B cell (primary cell): ENCODE measurements at regions of chr12 and their contacts with region 1.

Region 1: GRCh38 chr12:29380536-29381523 is at the start of gene ERGIC2:
- DNase-seq: peak; percentile 98
- ATAC-seq: peak; percentile 91
- H3K4me3 ChIP-seq: peak within 1 kb of the TSS; percentile 82 to 100 (median 99)
- H3K4me3 Mint-ChIP-seq: peak within 1 kb of the TSS; percentile 89
- H3K27ac ChIP-seq: peak within 1 kb of the TSS; percentile 86 to 88
- H3K27ac Mint-ChIP-seq: peak within 1 kb of the TSS; percentile 90
- H3K4me1 ChIP-seq: peaks cover 13 to 17% of the 10 kb centered on the region in 2 donors
- H3K4me1 Mint-ChIP-seq: peaks cover 35% of the 10 kb centered on the region
- H3K27me3 ChIP-seq: no peaks in the 10 kb centered on the region
- H3K27me3 Mint-ChIP-seq: peaks cover 8% of the 10 kb centered on the region
- CTCF ChIP-seq: no peak
- total RNA-seq, gene ERGIC2: 37.2 and 40.2 TPM in 2 replicates

Region 2: DNA sequence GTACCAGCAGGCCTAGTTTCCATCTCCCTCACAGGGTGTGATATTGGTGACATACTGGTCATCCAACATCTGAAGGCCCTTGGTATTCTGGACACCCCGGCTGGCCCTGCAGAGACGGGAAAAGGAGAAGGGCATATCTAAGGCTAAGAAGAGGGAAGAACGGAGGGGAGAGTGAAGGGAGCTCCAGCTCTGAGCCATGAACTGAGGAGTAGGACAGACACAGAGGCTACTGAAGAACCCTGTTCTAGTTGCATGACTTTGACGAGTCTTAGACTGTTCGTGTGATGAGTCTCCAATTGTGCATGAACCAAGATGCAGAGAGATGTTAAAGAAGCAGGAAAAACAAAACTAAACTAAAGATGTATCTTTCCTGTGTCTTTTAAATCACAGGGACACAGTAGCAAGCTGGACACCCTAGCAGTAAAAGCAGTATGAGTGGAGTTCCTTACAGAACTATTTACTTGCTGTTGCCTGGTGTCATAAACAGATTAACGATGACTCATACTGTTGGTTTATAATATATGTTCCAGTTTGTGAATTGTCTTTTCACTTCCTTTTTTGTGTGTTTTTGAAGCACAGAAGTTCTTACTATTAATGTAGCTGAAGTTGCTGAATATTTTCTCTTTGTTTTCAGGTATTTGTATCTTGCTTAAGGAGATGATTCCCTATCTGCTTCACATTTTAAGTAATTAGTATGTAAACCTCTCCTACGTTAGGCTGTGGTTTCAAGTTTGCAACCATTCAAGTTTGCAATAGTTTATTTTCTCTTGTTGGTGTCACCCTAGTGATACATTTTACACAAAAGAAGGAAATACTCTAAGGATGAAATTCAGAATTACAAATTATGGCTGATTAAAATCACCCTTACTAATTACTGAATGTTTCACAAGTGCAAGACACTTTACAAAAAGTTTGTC is 216.1 kb before region 1 on chr12:
- CTCF ChIA-PET with region 1: no interaction called
- POLR2A ChIA-PET with region 1: no interaction called
- intact Hi-C with region 1: loop called (anchors 5 kb)
- DNase-seq: peak; percentile 57
- ATAC-seq: peak; percentile 89
- H3K4me3 ChIP-seq: no peak overlapping the region
- H3K4me3 Mint-ChIP-seq: peak overlapping the region; percentile 7
- H3K27ac ChIP-seq: peak overlapping the region in 1 of 2 donors; percentile 49
- H3K27ac Mint-ChIP-seq: peak overlapping the region; percentile 32
- H3K4me1 ChIP-seq: peaks cover 11 to 13% of the 10 kb centered on the region in 2 donors
- H3K4me1 Mint-ChIP-seq: peaks cover 16% of the 10 kb centered on the region
- H3K27me3 ChIP-seq: no peaks in the 10 kb centered on the region
- H3K27me3 Mint-ChIP-seq: no peaks in the 10 kb centered on the region
- CTCF ChIP-seq: no peak

Region 3: DNA sequence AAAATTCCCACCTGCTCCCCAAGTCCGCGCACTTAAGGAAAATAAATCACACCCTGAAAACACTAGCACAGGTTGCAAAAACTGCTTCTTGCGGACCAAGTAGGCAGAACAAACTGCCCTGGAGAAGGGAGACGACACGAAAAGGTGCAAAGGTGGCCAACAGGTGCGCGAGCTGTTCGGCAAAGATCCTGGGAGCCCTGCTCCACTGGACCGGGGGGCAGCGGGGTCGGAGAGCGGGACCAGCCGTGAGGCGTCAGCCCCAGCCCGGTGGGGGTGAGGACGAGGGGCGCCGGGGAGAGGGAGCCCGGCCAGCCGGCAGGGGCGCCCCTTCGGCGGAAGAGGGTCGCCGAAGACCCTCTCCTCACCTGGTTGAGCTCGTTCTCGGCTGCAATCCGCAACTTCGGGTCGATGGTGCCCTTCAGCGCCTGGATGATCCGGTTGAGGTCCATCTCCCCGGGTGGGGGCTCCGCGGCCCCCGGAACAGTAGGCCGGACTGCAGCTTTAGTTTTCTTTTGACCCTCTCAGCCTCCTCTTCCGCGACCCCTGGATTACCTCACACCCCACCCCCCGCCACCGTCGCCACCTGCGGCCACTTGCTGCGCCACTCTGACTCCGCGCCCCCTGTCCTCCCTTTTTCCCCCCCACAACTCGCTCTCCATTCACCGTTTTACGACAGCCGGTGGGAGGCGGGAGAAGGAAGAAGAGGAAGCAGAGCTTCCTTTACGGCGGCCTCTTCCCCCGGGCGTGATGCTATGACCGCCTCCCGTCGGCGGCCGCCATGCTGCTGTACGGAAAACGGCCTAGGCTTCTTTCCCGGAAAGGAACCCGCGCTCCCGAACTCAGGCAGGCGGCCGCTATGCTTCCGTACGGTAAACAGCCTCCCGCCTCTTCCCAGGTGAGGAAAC is 1314.6 kb after region 1 on chr12 and contains the start of gene IPO8:
- CTCF ChIA-PET with region 1: no interaction called
- POLR2A ChIA-PET with region 1: interaction called, 3 read pairs
- intact Hi-C with region 1: loop called (anchors 1 kb)
- DNase-seq: peak; percentile 90
- ATAC-seq: peak; percentile 92
- H3K4me3 ChIP-seq: peak within 1 kb of the TSS; percentile 79 to 95 (median 89)
- H3K4me3 Mint-ChIP-seq: peak within 1 kb of the TSS; percentile 97
- H3K27ac ChIP-seq: peak within 1 kb of the TSS; percentile 68 to 88
- H3K27ac Mint-ChIP-seq: peak within 1 kb of the TSS; percentile 97
- H3K4me1 ChIP-seq: peaks cover 27% of the 10 kb centered on the region in 2 donors
- H3K4me1 Mint-ChIP-seq: peaks cover 42% of the 10 kb centered on the region
- H3K27me3 ChIP-seq: no peaks in the 10 kb centered on the region
- H3K27me3 Mint-ChIP-seq: no peaks in the 10 kb centered on the region
- CTCF ChIP-seq: peak; percentile 55
- total RNA-seq, gene IPO8: 58.1 and 60.2 TPM in 2 replicates

Region 4: DNA sequence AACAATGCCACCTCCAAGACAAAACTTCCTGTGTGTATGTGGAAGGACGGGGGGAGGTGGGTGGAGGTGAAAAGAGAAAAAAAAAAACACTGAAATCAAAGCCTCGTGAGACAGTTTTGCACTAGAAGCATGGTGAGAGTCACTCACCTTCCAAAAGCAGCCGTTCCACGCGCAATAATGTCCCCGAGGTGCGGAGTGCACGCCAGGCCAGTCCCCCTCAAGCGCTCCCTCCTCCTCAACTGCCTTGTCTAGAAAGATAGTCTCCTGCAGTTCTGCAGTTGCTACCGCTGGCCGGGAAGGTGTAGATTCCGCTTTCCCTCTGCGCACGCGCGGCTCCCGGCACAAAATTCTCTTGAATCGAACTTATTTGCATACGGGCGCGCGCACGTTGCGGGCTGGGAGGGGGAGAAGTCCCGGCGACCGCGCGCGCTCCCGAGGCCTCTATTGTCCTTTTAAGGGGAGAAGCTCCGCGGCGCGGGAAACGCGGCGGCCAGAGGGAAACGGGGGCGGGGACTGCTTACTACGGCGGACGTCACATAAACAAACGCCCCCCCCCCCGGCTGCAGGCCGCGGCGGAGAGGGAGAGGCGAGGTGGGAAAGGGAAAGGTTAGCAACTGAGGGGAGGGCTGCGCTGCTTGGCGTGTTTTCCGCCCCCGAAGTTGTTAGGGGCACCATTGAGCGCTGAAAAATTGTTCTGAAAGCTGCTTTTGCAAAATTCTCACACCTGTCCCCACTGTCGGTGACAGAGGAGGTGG is 1945.2 kb after region 1 on chr12 and contains the start of gene SINHCAF:
- CTCF ChIA-PET with region 1: no interaction called
- POLR2A ChIA-PET with region 1: no interaction called
- intact Hi-C with region 1: loop called (anchors 2 kb)
- DNase-seq: peak; percentile 99
- ATAC-seq: peak; percentile 64
- H3K4me3 ChIP-seq: peak within 1 kb of the TSS; percentile 70 to 96 (median 93)
- H3K4me3 Mint-ChIP-seq: peak within 1 kb of the TSS; percentile 98
- H3K27ac ChIP-seq: peak within 1 kb of the TSS; percentile 97
- H3K27ac Mint-ChIP-seq: peak within 1 kb of the TSS; percentile 99
- H3K4me1 ChIP-seq: peaks cover 27 to 36% of the 10 kb centered on the region in 2 donors
- H3K4me1 Mint-ChIP-seq: peaks cover 39% of the 10 kb centered on the region
- H3K27me3 ChIP-seq: no peaks in the 10 kb centered on the region
- H3K27me3 Mint-ChIP-seq: no peaks in the 10 kb centered on the region
- CTCF ChIP-seq: no peak
- total RNA-seq, gene SINHCAF: 127 and 129 TPM in 2 replicates